Activated CD4-positive, alpha-beta T cell treated with anti-CD3 and anti-CD28 coated beads, Interleukin-2, amount 10 ng/mL, durations not matched to agents 7 days and 5 days (primary cell): ENCODE measurements at regions of chr2 and their contacts with region 1.

Region 1: DNA sequence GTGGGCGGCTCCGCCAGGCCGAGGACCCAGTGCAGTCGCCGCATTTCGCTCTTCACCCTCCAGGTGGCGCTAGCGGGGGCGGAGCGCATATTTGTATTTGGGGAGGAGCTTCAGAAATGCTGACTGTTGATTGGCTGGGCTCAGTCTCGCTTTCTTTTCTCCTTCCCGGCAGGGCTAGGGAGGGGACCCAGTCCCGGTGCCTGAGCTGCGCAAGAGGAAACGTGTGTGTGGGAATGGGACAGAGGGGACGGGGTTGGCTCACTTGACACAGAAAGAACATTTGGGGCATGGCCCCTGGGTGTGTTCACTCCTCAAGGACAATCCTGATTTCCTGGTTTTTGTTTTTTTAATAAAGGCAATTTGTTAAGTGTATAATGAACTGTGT is 20.3 kb upstream of the DNMT3A start:
- DNase-seq: peak; percentile 95
- H3K4me3 Mint-ChIP-seq: peak overlapping the region; percentile 75
- H3K27ac Mint-ChIP-seq: peak overlapping the region; percentile 92
- H3K4me1 Mint-ChIP-seq: peaks cover 21% of the 10 kb centered on the region
- H3K27me3 Mint-ChIP-seq: no peaks in the 10 kb centered on the region

Region 2: DNA sequence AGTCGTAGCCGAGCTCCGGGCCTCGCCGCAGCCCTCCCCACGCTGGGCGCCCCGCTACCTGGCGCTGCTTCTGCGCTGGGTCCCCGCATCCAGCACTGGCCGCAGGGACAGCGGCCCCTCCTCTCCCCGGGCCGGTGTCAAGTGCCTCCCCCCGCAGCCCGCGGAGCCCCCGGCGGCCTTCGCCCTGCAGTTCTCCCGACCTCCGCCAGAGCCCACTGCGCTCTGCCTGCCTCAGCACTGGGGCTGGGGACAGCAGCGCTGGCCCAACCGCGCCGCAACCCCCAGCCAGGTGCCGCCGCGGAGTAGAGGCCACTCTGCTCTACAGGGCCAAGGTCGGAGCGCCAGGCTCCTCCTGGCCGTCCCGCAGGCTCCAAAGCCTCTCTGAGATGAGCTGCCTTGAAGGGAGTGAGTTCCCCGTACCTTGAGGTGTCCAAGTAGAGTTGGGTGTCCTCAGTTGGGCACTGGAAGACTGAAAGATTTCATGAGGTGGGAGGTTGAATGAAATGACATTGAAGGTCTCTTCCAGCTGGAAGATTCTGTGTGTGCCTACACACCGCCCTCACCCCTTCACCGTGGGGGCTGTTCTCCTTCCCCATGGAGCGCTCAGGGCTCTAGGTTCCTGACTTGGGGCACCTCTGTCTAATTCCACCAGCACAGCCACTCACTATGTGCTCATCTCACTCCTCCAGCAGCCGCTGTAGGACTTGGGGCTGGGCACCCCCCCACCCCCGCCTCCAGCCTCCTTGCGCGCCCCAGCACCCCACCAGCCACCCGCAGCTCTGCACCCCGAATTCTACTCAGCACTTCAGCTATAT is 19.5 kb before region 1 on chr2:
- CTCF ChIA-PET with region 1: interaction called, 18 read pairs
- POLR2A ChIA-PET with region 1: interaction called, 4 read pairs
- DNase-seq: peak; percentile 82
- H3K4me3 Mint-ChIP-seq: peak overlapping the region; percentile 79
- H3K27ac Mint-ChIP-seq: peak overlapping the region; percentile 87
- H3K4me1 Mint-ChIP-seq: peaks cover 33% of the 10 kb centered on the region
- H3K27me3 Mint-ChIP-seq: no peaks in the 10 kb centered on the region

Region 3: DNA sequence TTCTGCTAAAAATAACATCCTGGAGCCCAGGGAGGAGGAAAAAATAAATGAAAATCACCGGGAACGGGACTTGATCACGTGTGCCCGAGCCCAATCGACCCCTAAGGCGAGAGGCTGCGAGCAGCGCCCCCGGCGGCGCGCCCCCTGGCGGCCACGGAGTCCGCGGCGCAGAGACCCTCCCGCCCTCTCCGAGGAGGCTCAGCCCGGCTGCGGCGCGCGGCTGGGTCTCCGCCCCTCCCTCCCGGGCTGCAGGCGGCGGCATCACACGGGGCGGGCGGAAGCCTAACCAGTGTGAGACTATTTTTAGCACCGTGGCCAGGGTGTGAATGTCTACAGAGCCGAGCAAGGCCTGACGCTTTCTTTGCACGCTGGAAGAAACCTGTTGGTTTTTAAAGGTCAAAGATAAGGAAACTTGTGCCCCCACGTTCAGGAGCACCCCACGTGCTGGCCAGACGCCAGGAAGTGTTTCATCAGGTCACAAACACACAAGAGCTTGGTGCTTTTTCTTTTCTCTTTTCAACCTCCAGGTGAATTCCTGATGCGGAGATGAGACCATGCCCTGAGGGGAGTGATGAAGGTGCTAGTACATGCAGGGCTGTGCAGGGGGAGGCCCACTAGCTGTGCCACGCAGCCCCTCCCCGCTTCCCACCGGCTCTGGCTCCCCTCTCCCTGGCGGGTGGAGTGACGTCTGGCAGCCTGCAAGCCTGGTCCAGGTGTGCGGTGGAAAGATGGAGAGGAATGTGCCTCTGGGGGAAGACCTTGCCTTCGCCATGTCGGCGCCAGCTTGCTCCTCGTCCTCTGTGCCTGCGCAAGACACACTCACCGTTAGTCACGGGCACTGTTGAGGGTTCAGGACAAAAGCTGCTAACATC is 14.9 kb after region 1 on chr2:
- CTCF ChIA-PET with region 1: interaction called, 38 read pairs
- POLR2A ChIA-PET with region 1: interaction called, 5 read pairs
- DNase-seq: peak; percentile 94
- H3K4me3 Mint-ChIP-seq: peak overlapping the region; percentile 64
- H3K27ac Mint-ChIP-seq: peak overlapping the region; percentile 98
- H3K4me1 Mint-ChIP-seq: peaks cover 42% of the 10 kb centered on the region
- H3K27me3 Mint-ChIP-seq: no peaks in the 10 kb centered on the region

Region 4: DNA sequence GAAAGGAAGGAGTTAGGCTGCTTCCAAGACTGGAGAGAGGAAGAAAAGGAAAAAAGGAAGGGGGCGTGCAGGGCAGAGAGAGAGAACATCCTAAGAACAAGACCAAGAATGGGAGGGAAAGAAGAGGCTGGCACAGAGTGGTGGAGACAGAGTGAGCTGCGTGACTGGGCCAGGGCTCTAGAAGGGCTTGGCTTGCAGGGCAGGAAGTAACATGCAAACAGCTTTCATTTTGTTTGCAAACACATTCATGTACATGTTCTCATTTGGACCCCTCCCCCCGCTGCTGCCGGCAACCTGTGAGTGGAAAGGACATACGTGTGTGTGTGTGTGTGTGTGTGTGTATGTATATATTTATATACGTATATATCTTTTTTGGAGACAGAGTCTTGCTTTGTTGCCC is 26.4 kb after region 1 on chr2:
- CTCF ChIA-PET with region 1: interaction called, 14 read pairs
- POLR2A ChIA-PET with region 1: no interaction called
- DNase-seq: peak; percentile 76
- H3K4me3 Mint-ChIP-seq: peak overlapping the region; percentile 55
- H3K27ac Mint-ChIP-seq: peak overlapping the region; percentile 92
- H3K4me1 Mint-ChIP-seq: peaks cover 43% of the 10 kb centered on the region
- H3K27me3 Mint-ChIP-seq: no peaks in the 10 kb centered on the region